Sciatic nerve (tissue), 2 donors: ENCODE measurements at regions of chr2 and their contacts with region 1.

Region 1: DNA sequence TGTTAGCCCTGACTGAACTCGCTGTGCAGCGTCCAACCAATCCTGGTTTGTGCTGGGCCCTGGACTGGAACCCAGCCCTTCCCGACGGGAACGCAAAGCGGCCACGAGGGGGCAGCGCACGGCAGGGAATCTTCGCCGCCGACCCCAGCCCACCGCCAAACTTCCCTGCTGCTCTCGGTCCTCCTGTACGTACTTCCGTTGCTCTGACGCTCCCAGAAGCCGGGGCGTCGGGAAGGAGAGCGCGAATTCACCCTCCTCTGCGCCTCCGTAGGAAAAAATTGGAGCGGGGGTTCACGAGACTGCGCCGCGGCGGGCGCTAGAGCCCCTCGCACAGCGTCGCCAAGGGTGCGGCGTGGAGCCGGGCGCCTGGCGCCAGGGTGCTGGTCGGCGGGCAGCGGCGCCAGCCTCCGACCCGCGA is 948 bp upstream of the SH3RF3 start:
- DNase-seq: peak; percentile 89
- ATAC-seq: peak; percentile 90

Region 2: GRCh38 chr2:109185821-109186570 is 57.9 kb after region 1 on chr2:
- intact Hi-C with region 1: loop called (anchors 1 kb)
- DNase-seq: no peak
- ATAC-seq: peak; percentile 85

Region 3: DNA sequence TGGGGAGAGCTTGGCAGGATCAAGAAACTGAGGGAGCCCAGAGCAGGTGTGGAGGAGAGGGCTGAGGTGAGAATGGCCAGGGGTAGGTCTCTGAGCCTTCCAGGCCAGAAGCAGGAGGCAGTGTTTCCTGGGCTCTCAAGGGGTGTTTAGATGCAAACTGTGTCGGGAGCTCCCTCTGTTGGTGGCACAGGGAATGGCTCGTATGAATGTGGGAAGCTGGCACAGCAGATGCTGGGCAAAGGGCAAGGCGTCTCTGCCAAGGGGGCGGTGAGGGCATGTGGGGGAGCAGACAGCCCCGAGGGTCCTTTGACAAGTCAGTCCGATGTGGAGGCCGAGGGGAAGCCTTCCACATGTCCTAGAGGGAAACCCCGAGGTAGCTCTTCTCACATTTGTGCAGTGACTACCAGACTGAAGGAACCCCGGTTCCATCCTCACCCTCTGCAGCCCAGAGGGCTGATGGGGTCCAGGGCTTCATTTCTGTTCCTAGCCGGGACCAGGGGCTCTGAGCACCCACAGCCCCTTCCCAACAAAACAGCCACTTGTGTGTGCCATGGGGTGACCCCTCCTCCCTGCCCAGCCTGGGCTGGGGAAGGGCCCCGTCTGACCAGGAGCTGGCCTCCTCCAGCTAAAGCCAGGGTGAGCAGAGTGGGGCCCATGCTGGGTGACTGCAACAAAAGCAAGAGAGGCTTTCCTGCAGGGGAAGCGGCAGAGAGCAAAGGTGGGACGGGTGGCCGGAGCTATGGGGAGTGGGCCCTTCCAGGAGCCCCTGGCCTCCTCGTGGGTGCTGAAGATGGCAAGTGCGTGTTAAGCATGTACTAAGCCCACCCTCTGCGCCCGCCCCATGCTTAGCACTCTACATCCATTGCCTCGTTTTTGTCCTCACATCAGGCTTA is 382.3 kb after region 1 on chr2:
- intact Hi-C with region 1: loop called (anchors 10 kb)
- DNase-seq: peak; percentile 88
- ATAC-seq: peak; percentile 67